ENCODE measurements at regions of chr2 and their contacts with region 1.

Region 1: GRCh38 chr2:177263451-177264208 is 897 bp downstream of the NFE2L2 start:
- DNase-seq: peak; percentile 93 to 97 (median 94)
- H3K4me3 ChIP-seq: peak overlapping the region; percentile 57 to 100
- H3K4me3 Mint-ChIP-seq: peak overlapping the region; percentile 93 to 98 (median 96)
- H3K27ac ChIP-seq: peak overlapping the region; percentile 100
- H3K27ac Mint-ChIP-seq: peak overlapping the region; percentile 94 to 100 (median 99)
- H3K4me1 ChIP-seq: peaks cover 59% of the 10 kb centered on the region
- H3K4me1 Mint-ChIP-seq: peaks cover 36 to 75% (median 53%) of the 10 kb centered on the region in 4 donors
- H3K27me3 ChIP-seq: no peaks in the 10 kb centered on the region
- H3K27me3 Mint-ChIP-seq: no peaks in the 10 kb centered on the region

Region 2: GRCh38 chr2:177118636-177119035 is 145.0 kb before region 1 on chr2:
- CTCF ChIA-PET with region 1: no interaction called
- POLR2A ChIA-PET with region 1: no interaction called
- intact Hi-C with region 1: no loop called
- DNase-seq: no peak
- H3K4me3 ChIP-seq: no peak overlapping the region
- H3K4me3 Mint-ChIP-seq: no peak overlapping the region
- H3K27ac ChIP-seq: no peak overlapping the region
- H3K27ac Mint-ChIP-seq: no peak overlapping the region
- H3K4me1 ChIP-seq: no peaks in the 10 kb centered on the region
- H3K4me1 Mint-ChIP-seq: no peaks in the 10 kb centered on the region
- H3K27me3 ChIP-seq: peaks cover 4% of the 10 kb centered on the region
- H3K27me3 Mint-ChIP-seq: peaks cover 9 to 17% of the 10 kb centered on the region in 2 donors

Region 3: GRCh38 chr2:177148477-177149154 is 115.0 kb before region 1 on chr2:
- CTCF ChIA-PET with region 1: interaction called, 10 read pairs
- POLR2A ChIA-PET with region 1: interaction called, 19 read pairs
- intact Hi-C with region 1: no loop called
- DNase-seq: peak; percentile 66 to 76 (median 71)
- H3K4me3 ChIP-seq: peak overlapping the region; percentile 53 to 73
- H3K4me3 Mint-ChIP-seq: peak overlapping the region; percentile 85 to 94 (median 90)
- H3K27ac ChIP-seq: peak overlapping the region; percentile 19
- H3K27ac Mint-ChIP-seq: peak overlapping the region in 6 of 7 donors; percentile 31 to 83 (median 58)
- H3K4me1 ChIP-seq: peaks cover 11% of the 10 kb centered on the region
- H3K4me1 Mint-ChIP-seq: peaks cover 6 to 12% (median 12%) of the 10 kb centered on the region in 4 donors
- H3K27me3 ChIP-seq: peaks cover 15% of the 10 kb centered on the region
- H3K27me3 Mint-ChIP-seq: peaks cover 14 to 19% of the 10 kb centered on the region in 2 donors

Region 4: DNA sequence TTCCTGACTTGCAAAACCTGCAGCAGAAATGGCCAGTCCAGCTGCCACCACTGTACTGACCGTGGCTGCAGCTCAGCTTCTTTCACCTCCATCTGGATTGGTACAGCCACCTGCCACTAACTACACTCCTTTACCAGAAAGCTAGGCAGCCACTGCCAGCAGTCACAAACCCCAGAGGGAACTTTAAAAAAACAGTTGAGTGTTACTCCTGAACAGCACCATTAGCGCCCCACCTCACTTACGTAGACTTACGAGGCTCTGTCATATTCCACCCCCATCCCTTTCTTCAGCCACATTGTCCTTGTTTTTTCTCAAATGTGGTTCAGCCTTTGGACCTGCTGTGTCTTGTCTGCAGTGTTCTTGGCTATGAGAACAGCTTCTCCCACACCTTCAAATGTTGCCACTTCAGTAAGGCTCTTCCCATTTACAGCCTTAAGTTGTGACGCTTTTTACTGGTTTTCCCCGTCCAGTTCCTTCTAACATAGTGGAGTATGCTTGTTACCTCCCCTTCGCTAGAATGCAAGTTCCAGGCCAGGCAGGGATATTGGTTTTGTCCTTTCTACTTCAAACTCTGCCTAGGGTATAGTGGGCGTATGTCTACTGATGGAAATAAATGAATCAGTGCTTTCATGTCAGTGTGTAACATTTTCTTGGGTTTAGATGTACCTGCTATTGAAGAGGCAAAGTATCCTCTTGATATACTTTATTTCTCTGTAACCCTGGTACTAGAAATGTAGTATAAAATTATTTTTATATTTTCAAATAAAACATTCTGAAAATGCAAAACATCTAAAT is 34.0 kb before region 1 on chr2:
- CTCF ChIA-PET with region 1: interaction called, 41 read pairs
- POLR2A ChIA-PET with region 1: interaction called, 133 read pairs
- intact Hi-C with region 1: no loop called
- DNase-seq: no peak
- H3K4me3 ChIP-seq: no peak overlapping the region
- H3K4me3 Mint-ChIP-seq: peak overlapping the region in 1 of 8 donors; percentile 15
- H3K27ac ChIP-seq: no peak overlapping the region
- H3K27ac Mint-ChIP-seq: peak overlapping the region in 6 of 7 donors; percentile 7 to 88 (median 66)
- H3K4me1 ChIP-seq: no peaks in the 10 kb centered on the region
- H3K4me1 Mint-ChIP-seq: peaks cover 25 to 60% (median 39%) of the 10 kb centered on the region in 4 donors
- H3K27me3 ChIP-seq: no peaks in the 10 kb centered on the region
- H3K27me3 Mint-ChIP-seq: no peaks in the 10 kb centered on the region

Region 5: DNA sequence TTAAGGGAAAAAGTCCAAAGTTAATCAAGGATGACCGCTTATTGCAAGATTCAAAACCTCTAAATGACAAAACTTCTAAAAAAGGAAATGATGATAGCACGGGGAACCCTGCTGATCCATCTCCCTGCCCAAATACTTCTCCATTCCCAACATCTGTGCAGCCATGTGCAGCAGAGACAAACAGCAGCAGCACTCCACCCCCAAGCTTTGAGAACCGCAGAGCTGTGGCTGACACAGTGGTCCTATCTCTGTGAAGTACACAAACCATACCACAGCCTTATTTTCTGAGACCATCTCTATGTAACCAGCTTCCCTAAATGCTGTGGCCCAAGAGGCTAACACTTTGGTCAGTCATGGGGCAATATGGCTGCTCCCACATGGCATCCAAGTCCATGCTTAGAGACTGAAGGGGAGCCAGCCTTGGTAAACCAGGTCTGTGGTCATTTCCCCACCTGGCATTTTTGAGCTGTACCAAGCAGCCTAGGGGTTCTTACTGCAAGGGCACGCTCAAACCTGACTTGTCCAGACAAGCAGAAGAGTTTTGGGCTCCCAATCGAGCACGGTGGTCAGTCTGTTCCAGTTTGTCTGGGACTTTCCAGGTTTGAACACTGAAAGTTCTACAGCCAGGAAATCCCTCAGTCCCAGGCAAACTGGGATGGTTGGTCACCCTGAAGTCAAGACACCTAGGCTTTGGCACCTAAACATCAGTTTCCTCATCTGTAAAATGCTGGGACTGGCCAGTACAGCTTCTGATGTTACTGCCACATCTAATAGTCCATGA is 18.0 kb after region 1 on chr2:
- CTCF ChIA-PET with region 1: interaction called, 48 read pairs
- POLR2A ChIA-PET with region 1: interaction called, 18 read pairs
- intact Hi-C with region 1: no loop called
- DNase-seq: no peak
- H3K4me3 ChIP-seq: no peak overlapping the region
- H3K4me3 Mint-ChIP-seq: no peak overlapping the region
- H3K27ac ChIP-seq: no peak overlapping the region
- H3K27ac Mint-ChIP-seq: peak overlapping the region in 1 of 7 donors; percentile 53
- H3K4me1 ChIP-seq: no peaks in the 10 kb centered on the region
- H3K4me1 Mint-ChIP-seq: no peaks in the 10 kb centered on the region
- H3K27me3 ChIP-seq: no peaks in the 10 kb centered on the region
- H3K27me3 Mint-ChIP-seq: no peaks in the 10 kb centered on the region

Region 6: DNA sequence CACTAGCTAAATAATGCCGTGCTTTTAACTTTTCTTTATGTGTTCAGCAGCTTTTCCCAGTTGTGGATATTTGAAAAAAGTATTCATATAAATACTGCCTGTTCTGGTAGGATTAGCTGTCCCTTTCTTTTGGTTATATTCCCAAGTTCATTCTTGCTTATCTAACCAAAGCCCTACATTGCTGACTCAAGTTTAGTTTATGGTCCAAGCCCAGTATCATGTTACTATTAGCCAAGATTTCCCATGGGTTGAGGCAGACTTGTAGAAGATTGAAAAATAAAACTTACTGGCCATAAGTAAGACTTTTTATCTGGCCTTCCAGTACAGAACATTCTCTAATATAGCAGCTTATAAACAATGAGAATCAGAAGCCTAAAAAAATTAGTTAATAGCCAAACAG is 50.6 kb after region 1 on chr2:
- CTCF ChIA-PET with region 1: interaction called, 33 read pairs
- POLR2A ChIA-PET with region 1: interaction called, 138 read pairs
- intact Hi-C with region 1: no loop called
- DNase-seq: no peak
- H3K4me3 ChIP-seq: no peak overlapping the region
- H3K4me3 Mint-ChIP-seq: no peak overlapping the region
- H3K27ac ChIP-seq: no peak overlapping the region
- H3K27ac Mint-ChIP-seq: no peak overlapping the region
- H3K4me1 ChIP-seq: peaks cover 17% of the 10 kb centered on the region
- H3K4me1 Mint-ChIP-seq: peaks cover 10 to 24% (median 15%) of the 10 kb centered on the region in 4 donors
- H3K27me3 ChIP-seq: no peaks in the 10 kb centered on the region
- H3K27me3 Mint-ChIP-seq: no peaks in the 10 kb centered on the region

Region 7: DNA sequence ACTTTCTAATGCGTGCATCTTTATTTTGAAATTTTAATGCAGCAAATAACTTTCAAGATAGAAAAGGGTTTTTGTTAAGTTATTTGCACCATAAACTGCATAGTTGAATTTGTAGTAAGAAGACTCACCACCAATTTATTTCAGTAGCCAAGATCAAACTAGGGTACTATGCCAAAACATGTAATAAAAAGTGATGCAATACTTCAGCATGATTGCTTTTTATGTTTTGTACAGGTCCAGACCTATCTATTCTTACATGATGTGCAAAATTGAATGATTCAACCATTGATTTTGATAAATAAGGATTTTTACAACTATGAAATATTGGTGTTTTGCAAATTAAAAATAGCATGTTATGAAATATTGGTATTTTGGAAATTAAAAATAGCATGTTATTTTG is 155.6 kb after region 1 on chr2:
- CTCF ChIA-PET with region 1: no interaction called
- POLR2A ChIA-PET with region 1: interaction called, 20 read pairs
- intact Hi-C with region 1: no loop called
- DNase-seq: no peak
- H3K4me3 ChIP-seq: no peak overlapping the region
- H3K4me3 Mint-ChIP-seq: no peak overlapping the region
- H3K27ac ChIP-seq: no peak overlapping the region
- H3K27ac Mint-ChIP-seq: no peak overlapping the region
- H3K4me1 ChIP-seq: peaks cover 5% of the 10 kb centered on the region
- H3K4me1 Mint-ChIP-seq: peaks cover 8 to 20% (median 18%) of the 10 kb centered on the region in 4 donors
- H3K27me3 ChIP-seq: no peaks in the 10 kb centered on the region
- H3K27me3 Mint-ChIP-seq: no peaks in the 10 kb centered on the region

Measured in CD4-positive, alpha-beta memory T cell (primary cell).